ENCODE measurements at regions of chr2 and their contacts with region 1.

Region 1: DNA sequence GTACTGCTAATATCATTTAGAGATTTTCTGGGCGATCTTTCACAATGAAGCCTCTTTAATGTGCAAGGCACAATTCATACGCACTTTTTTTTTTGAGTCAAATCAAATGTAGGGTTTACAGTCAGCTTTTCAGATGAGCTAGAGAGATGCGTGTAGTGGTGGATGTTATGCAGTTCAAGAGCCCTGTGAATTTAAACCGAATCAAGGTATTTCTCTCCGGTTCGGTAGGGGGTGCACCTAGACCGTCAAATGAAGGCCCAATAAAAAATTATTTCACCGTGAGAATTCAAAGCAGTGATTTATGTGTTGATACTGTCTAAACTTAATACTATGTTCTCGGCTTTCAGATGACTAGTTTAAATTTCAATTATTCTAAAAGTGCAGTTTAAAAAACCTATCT is 1.1 kb downstream of the PTH2R start:
- DNase-seq: no peak

Region 2: DNA sequence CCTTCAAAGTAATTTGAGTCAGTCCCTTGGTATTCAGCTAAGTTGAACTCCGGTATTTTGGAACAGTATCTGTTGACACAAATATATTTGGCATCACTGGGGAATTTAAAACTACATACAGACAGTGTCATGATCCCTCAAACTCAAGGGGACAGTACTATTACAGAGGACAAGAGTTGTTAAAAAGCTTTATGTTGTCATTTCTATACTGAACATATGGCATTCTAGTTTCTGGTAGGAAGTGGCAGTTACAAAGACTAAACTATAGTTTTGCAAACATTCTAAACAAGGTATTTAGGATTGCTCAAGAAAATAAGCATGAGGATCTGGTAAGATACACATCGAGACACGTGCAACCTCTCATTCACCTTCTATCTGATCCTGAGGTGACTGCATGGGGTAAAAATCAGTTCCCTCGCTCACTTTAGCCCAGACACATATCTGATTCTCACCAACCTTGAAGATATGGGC is 712.8 kb before region 1 on chr2:
- intact Hi-C with region 1: loop called in 1 of 2 experiments (anchors 5 kb)
- DNase-seq: no peak

Region 3: GRCh38 chr2:207828361-207829057 is 579.2 kb before region 1 on chr2:
- intact Hi-C with region 1: no loop called
- DNase-seq: peak; percentile 32

Region 4: DNA sequence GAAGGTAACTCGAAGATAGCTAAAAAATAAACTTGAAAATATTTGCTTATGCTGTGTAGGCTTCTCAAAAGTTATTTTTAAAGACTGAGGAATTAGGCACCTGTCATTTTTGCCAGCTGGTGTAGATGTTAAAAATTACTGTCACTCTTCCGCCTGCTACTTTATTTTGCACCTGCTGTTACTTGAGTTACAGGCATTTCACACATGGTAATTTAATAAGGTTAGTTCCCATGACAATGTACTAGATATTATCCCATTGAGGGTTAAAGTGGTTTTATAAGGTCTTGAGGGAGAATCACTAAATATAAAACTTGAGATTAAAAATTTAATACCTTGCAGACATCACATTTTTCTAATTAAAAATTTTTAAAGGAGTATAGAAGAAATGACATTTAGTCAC is 1880.7 kb after region 1 on chr2:
- intact Hi-C with region 1: loop called in 1 of 2 experiments (anchors 5 kb)
- DNase-seq: no peak